ENCODE measurements at regions of chr3 and their contacts with region 1.

Region 1: DNA sequence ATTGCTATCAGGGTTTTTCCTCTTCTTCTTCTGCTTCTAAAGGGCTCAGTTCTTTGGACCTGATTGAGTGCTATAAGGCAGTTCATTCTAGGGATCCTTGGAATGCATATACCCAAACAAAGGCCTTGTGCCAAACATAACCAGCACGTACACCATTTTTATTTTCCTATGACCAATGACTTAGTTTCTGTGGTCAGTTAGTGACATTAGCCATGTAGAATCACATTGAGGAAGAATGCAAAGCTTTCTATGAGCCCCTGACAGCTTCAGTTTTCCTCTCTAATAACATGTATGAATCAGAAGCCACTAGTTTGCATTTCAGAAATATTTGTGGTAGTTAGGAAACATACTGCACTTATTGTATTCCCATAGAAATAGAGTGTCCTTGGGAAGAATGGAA is 240.0 kb downstream of the THRB start:
- DNase-seq: no peak
- H3K4me3 ChIP-seq: no peak overlapping the region
- H3K27ac ChIP-seq: no peak overlapping the region
- H3K4me1 ChIP-seq: peaks cover 0 to 6% (median 0%) of the 10 kb centered on the region in 4 donors
- H3K27me3 ChIP-seq: no peaks in the 10 kb centered on the region
- CTCF ChIP-seq: no peak
- EP300 ChIP-seq: no peak
- POLR2A ChIP-seq: no peak

Region 2: DNA sequence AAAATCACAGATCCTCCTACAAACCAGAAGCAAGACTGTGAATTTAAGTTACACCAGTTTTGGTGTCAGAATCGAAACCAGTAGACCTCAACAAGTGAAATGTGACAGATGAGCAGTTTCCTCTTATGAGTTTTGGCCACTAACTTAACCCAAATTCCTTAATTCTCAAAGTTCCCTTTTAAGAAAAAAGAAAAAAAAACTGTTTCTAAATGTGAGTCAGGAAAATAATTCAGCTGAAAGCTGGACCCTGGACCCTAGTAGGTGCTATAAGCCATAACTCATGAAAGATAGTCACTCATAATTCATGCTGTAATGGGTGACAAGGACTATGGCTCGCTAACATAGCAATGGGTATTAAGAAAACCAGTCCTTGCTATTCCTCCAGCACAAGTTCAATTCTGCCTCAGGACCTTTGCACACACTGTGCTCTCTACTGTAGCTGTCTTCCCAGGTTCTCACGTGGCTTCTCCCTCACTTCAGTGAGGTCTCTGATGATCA is 249.0 kb after region 1 on chr3:
- in situ Hi-C with region 1: loop called in 2 of 4 experiments (anchors 5 to 25 kb)
- intact Hi-C with region 1: no loop called
- DNase-seq: no peak
- H3K4me3 ChIP-seq: no peak overlapping the region
- H3K27ac ChIP-seq: no peak overlapping the region
- H3K4me1 ChIP-seq: peaks cover 0 to 39% (median 10%) of the 10 kb centered on the region in 4 donors
- H3K27me3 ChIP-seq: no peaks in the 10 kb centered on the region
- CTCF ChIP-seq: no peak
- EP300 ChIP-seq: no peak
- POLR2A ChIP-seq: no peak